Activated naive CD4-positive, alpha-beta T cell treated with anti-CD3 and anti-CD28 coated beads for 36 hours (primary cell): ENCODE measurements at regions of chr20 and their contacts with region 1.

Region 1: DNA sequence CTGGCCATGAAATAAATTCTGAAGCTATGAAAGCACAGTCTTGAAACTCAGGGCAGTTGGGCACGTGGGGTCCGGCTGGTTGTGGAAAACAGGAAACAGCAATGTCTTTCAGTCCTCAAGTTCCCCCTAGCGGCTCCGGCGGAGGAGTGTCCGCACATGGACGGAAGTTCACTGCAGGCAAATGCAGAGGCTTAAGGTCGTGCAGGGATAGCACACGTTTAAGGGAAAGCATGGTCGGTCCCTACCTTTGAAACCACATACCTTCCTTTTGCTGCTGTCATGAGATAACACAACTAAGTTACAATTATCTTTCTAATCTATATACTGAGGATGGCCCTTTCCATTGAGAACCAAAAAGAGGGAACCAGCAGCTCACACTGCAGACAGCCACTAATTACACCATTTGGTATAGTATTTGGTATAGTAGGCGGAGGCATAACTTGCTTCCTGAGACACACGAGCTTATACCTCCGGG is 52.6 kb upstream of the NFATC2 start:
- DNase-seq: peak; percentile 89
- H3K4me3 Mint-ChIP-seq: no peak overlapping the region
- H3K27ac Mint-ChIP-seq: no peak overlapping the region
- H3K4me1 Mint-ChIP-seq: peaks cover 40% of the 10 kb centered on the region
- H3K27me3 Mint-ChIP-seq: peaks cover 2% of the 10 kb centered on the region

Region 2: DNA sequence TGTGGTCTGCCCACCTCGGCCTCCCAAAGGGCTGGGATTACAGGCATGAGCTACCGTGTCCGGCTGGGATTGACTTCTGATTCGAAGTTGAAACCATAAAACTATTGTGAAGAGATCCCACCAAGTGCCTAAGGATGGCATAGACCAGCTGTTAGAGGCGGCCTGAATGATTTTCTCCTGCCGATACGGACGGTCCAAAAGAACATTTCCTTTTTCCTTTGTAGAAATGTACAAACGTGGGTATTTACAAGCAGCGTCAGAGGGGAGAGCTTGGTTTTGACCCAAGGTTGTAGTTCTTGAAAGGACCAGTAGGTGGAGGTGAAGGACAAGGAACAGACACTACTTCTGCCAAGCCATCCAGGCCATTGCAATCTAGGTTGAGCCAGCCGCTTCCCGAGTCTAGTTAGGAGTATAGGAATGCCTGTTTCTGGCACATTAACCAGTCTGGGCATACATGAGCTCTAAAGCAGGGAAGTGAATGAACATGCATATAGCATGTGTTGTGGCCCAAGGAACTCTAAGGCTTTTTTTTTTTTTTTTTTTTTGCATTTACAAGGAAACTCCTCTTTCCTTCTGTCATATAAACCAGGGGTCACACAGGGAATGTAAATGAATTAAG is 607.4 kb before region 1 on chr20:
- CTCF ChIA-PET with region 1: interaction called, 4 read pairs
- intact Hi-C with region 1: loop called (anchors 10 kb)
- DNase-seq: peak; percentile 78
- H3K4me3 Mint-ChIP-seq: no peak overlapping the region
- H3K27ac Mint-ChIP-seq: no peak overlapping the region
- H3K4me1 Mint-ChIP-seq: no peaks in the 10 kb centered on the region
- H3K27me3 Mint-ChIP-seq: peaks cover 23% of the 10 kb centered on the region

Region 3: DNA sequence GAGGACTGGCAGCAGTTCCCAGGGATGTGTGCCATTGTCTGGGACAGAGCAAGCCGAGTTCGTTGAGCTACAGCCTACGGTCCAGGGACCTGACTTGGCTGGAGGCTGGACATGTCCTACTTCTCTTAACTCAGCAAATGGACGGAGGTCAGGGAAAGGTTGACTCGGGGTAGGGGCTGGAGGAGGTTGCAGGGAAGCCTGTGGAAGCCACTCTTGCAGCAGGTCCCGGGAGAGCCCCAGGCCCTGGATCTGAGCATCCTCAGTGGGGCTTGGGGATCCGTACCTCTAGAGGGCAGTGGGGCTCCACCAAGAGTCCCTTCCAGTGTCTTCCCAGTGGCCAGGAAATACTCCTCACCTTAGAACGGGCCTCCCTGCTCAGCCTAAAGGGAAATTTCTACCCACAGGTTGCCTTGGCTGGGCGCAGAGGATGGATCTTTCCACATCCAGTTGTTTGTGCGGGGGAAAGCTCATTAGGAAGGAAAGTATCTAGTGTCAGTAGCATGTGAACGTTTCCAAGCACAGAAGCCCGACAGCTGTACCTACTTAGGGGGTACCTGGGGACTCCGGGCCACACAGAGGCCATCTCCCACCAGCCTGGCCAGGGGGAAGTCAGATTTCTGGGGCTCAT is 222.8 kb before region 1 on chr20:
- CTCF ChIA-PET with region 1: interaction called, 34 read pairs
- intact Hi-C with region 1: loop called (anchors 1 kb)
- DNase-seq: peak; percentile 77
- H3K4me3 Mint-ChIP-seq: no peak overlapping the region
- H3K27ac Mint-ChIP-seq: no peak overlapping the region
- H3K4me1 Mint-ChIP-seq: peaks cover 1% of the 10 kb centered on the region
- H3K27me3 Mint-ChIP-seq: no peaks in the 10 kb centered on the region

Region 4: GRCh38 chr20:51385646-51386530 is 209.2 kb before region 1 on chr20:
- CTCF ChIA-PET with region 1: interaction called, 20 read pairs
- intact Hi-C with region 1: loop called (anchors 1 kb)
- DNase-seq: peak; percentile 61
- H3K4me3 Mint-ChIP-seq: no peak overlapping the region
- H3K27ac Mint-ChIP-seq: no peak overlapping the region
- H3K4me1 Mint-ChIP-seq: peaks cover 48% of the 10 kb centered on the region
- H3K27me3 Mint-ChIP-seq: no peaks in the 10 kb centered on the region

Region 5: DNA sequence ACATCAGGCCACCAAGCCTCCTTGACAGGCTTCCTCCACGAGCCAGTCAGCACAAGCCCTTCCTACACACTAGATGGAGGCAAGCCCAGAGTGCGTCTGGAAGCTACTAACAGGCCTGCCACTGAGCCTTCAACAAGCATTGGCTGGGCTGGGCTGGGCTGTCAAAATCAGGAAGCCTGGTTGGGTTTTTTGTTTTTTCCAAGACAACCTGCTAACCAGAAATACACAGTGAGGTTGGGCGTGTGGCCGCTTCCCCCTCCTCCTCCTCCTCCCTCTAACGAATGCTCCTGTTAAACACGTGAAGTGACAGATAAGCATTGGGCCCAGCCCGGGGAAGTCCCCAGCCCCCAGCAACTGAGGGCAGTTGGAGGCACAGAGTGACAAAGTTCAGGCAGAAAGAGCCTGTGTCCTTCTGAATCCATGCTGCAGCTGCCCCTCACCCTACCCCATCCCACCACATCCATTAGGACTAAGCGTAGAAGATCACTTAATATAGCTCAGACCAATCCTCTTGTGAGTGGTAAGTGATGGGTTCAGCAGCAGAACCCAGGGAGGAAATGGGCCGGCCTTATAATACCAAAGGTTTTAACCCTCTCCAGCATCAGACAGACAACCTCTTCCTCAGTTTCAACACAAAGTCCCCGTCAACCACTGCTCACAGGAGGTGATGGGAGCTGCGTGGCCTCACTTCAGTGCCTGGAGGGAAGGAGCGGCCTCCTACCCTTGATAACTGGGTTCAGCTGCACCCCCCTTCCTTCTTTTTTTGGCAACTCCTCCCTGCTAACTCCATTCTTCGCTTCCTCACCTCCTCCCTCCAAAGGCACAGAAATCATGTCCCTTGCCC is 53.7 kb before region 1 on chr20:
- CTCF ChIA-PET with region 1: interaction called, 11 read pairs
- intact Hi-C with region 1: loop called (anchors 1 kb)
- DNase-seq: peak; percentile 91
- H3K4me3 Mint-ChIP-seq: peak overlapping the region; percentile 96
- H3K27ac Mint-ChIP-seq: peak overlapping the region; percentile 98
- H3K4me1 Mint-ChIP-seq: peaks cover 42% of the 10 kb centered on the region
- H3K27me3 Mint-ChIP-seq: no peaks in the 10 kb centered on the region

Region 6: GRCh38 chr20:51624157-51624731 is 29.1 kb after region 1 on chr20:
- CTCF ChIA-PET with region 1: interaction called, 6 read pairs
- intact Hi-C with region 1: loop called (anchors 1 kb)
- DNase-seq: peak; percentile 82
- H3K4me3 Mint-ChIP-seq: no peak overlapping the region
- H3K27ac Mint-ChIP-seq: no peak overlapping the region
- H3K4me1 Mint-ChIP-seq: peaks cover 5% of the 10 kb centered on the region
- H3K27me3 Mint-ChIP-seq: no peaks in the 10 kb centered on the region

Region 7: DNA sequence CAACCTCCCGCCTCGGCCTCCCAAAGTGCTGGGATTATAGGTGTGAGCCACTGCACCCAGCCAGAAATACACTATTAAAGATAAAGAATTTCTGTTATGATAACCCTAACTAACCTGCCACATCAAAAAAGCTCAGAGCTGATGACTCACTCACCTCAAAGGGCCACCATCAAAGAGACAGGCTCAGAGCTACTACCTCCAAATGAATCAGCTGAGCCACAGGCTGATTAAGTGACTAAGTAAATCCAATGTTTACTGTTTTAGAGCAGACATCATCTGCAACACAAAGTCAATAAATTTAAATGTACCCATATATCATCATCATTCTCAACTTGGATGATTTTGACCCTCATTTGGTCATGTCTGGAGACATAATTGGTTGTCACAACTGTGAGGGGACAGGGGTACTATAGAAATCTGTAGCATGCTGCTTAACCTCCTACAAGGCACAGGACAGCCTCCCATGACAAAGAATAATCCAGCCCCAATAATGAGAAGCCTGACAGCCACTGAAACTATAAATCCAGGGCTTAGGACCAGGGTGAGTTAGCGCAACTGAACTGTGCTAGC is 66.6 kb after region 1 on chr20:
- CTCF ChIA-PET with region 1: no interaction called
- intact Hi-C with region 1: no loop called
- DNase-seq: peak; percentile 62
- H3K4me3 Mint-ChIP-seq: no peak overlapping the region
- H3K27ac Mint-ChIP-seq: no peak overlapping the region
- H3K4me1 Mint-ChIP-seq: peaks cover 19% of the 10 kb centered on the region
- H3K27me3 Mint-ChIP-seq: peaks cover 4% of the 10 kb centered on the region

Region 8: DNA sequence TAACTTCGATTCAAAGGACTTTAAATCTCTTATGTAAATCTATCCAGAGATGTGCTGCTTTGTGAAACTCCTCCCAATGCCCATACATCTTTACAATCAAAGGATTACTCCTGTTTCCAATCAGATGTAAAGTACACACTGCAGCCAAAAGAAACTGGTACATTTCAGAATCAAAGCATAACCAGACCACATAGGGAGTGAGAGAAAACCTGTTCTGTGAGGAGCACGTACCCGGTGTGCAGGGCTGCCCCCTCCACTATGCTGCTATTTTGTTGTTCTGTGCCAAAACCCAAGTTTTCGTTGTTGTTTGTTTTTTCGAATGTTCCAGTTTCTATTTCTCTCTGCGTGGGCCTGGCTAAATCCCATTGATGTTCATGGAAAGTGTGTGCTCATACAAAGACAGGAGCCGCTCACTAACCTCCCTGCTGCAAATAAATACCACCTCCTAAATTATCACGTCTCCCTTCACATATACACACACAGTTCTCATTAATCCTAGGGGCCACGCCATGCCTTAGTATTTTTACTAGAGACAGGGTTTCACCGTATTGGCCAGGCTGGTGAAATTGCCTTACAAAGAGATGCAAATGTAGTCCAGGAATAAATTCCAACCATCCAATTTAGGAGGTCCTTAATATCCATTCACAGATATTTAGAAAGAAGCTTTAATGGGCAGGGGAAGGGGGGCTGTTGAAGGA is 120.2 kb after region 1 on chr20:
- CTCF ChIA-PET with region 1: no interaction called
- intact Hi-C with region 1: no loop called
- DNase-seq: no peak
- H3K4me3 Mint-ChIP-seq: no peak overlapping the region
- H3K27ac Mint-ChIP-seq: no peak overlapping the region
- H3K4me1 Mint-ChIP-seq: peaks cover 9% of the 10 kb centered on the region
- H3K27me3 Mint-ChIP-seq: peaks cover 5% of the 10 kb centered on the region

Region 9: DNA sequence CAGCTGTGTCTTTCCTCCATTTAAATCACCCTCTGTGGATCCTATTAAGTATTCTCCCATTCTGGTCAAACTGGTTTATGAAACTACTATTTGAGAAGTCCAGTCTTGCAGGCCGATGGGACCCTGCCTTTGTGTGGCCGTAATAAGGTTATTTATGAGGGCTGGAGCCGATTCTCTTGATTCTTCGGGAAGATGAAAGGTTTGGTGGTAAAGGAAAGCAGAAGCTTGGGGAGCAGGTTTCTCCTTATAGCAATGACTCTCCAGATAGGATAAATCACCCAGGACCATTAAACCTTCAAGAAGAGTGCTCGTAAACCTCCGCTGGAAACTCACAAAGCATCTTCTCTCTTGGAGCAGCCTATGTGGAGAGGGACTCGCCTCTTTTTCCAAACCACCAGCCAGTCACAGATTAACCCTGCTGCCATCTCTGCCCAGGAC is 276.8 kb after region 1 on chr20:
- CTCF ChIA-PET with region 1: no interaction called
- intact Hi-C with region 1: no loop called
- DNase-seq: no peak
- H3K4me3 Mint-ChIP-seq: no peak overlapping the region
- H3K27ac Mint-ChIP-seq: no peak overlapping the region
- H3K4me1 Mint-ChIP-seq: no peaks in the 10 kb centered on the region
- H3K27me3 Mint-ChIP-seq: peaks cover 4% of the 10 kb centered on the region